ENCODE measurements at regions of chr1 and their contacts with region 1.

Region 1: DNA sequence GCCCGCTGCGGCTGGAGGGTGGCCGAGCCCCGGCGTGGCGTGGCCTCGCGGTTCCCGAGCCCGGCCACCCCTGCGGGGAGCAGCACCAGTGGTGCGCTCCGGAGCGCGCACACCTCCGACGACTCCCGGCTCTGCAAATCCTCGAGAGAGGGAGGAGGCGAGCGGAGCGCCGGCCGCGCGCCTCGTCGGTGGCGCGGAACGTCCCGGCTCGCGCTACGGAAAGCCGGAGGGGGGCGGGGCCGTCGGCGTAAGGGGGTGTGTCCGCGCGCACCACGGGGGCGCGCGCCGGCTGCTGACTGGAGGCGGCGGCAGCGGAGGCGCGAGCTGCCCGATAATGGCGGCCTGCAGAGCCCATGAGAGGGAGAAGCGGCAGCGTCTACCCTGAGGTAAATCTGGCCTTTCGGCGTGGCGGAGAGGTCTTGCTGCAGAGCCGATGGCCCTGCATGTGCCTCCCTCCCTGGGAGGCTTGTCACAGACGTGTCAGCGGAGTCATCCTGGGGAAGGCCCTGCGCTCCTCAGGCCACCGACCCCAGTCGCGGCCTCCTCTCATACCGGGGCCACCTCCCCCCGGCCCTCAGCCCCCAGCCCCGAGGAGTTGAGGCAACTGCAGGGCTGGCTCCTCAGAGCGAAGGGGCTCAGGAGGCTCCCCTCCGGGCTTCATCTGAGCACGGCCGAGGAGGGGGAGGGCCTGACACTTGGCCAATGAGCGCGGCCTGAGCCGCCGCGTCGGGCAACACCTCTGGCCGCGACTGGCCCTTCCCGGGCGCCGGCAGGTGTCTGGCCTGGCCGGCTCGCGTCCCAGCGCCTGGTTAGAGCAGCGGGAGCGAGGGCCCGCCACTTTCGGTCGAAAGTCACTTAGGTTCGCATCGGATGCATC is at the start of gene PDIK1L:
- DNase-seq: peak; percentile 95
- H3K4me3 Mint-ChIP-seq: peak within 1 kb of the TSS; percentile 95
- H3K27ac Mint-ChIP-seq: peak within 1 kb of the TSS; percentile 86
- H3K4me1 Mint-ChIP-seq: peaks cover 35% of the 10 kb centered on the region
- H3K27me3 Mint-ChIP-seq: no peaks in the 10 kb centered on the region
- total RNA-seq, gene PDIK1L: 21.3 to 22.7 TPM

Region 2: DNA sequence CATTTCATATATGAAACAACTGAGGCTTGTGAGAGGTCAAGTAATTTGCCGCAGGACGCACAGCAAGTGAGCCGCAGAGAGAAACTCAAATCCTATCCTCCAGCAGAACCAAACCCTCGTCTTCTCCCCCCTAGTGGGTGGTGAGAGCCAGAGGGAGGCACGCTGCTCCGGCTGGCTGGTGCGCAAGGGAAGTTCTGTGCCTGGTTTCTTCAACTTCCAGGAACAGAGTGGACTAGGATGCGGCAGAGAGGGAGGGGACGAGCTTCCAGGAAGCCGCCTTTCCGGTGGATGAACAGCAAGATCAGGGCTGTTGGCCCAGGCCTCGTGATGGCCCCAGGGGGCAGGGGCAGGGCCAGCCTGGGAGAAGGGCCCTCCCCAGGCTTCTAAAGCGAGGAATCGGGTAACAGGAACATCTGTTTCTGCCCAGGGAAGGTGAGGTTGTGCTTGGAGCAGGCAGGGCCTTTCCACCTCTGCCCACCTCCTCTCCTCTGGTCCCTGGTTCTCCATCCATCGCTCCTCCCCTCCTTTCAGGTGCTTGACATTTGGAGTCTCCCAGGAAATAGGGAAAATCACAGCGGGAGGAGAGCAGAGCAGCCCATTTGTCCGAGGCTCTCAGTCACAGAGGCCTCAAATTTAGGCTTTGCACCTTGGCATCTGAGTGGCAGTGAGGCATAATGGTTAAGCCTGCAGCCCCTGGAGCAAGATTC is 16.9 kb before region 1 on chr1:
- CTCF ChIA-PET with region 1: no interaction called
- POLR2A ChIA-PET with region 1: no interaction called
- DNase-seq: no peak
- H3K4me3 Mint-ChIP-seq: no peak overlapping the region
- H3K27ac Mint-ChIP-seq: no peak overlapping the region
- H3K4me1 Mint-ChIP-seq: peaks cover 17% of the 10 kb centered on the region
- H3K27me3 Mint-ChIP-seq: peaks cover 46% of the 10 kb centered on the region

Region 3: DNA sequence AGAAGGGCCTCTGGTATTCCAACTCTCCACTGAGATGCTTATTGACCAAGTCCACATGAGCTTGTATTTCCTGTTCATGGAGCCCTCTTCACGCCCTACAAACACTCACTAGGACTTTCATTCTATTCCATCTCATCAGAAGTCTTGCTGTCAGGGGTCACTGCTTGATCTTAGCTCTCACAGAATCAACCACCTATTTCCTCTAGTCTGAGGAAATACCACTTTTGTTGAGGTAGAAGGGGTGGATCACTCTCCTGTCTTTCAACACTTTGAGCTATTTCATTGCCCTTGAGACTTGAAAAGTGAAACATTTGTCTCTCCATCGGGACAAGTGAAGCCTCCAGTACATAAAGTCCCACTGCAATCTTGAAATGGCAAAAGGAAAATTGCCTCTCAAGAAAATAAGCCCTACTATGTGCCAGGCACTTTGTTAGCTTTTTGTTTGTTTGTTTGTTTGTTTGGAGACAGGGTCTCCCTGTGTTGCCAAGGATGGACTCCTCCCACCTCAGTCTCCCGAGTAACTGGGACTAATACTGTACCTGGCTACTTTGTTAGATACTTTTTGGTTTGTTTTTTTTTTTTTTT is 27.3 kb after region 1 on chr1:
- CTCF ChIA-PET with region 1: interaction called, 168 read pairs
- POLR2A ChIA-PET with region 1: interaction called, 22 read pairs
- DNase-seq: no peak
- H3K4me3 Mint-ChIP-seq: no peak overlapping the region
- H3K27ac Mint-ChIP-seq: no peak overlapping the region
- H3K4me1 Mint-ChIP-seq: peaks cover 10% of the 10 kb centered on the region
- H3K27me3 Mint-ChIP-seq: peaks cover 7% of the 10 kb centered on the region